ENCODE measurements at regions of chr22 and their contacts with region 1.

Region 1: DNA sequence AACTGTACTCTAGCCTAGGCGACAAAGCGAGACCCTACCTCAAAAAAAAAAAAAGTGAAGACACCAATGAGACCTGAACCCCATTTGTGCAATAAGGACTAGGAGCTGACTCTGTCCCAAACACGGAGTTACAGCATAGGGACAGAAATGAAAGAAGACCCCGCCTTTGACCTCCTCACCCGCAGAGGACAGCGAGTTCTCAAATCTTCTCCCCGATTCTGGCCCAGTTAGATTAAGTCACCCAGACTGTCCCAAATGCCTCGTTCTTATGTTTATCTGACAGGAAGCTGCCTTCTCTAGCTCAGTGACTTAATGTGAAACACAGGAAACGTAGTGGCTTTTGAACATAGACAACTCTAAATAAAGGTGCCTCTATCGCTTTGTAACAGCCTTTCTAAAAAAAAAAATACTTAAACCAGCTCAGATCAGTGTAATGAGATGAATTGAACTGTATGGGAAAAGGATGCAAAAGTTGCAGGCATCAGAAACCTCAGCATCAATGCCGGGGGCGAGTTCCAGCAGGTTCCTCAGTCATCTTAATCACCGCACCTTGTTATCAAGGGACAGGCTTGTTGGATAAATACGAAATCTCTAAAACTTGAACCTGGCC is 10.6 kb downstream of the MYH9 start:
- DNase-seq: no peak
- H3K4me3 ChIP-seq: no peak overlapping the region
- H3K27ac ChIP-seq: peak overlapping the region; percentile 4; the same call in 1 of the 2 replicates
- H3K4me1 ChIP-seq: peaks cover 93% of the 10 kb centered on the region
- H3K27me3 ChIP-seq: no peaks in the 10 kb centered on the region
- CTCF ChIP-seq: no peak

Region 2: DNA sequence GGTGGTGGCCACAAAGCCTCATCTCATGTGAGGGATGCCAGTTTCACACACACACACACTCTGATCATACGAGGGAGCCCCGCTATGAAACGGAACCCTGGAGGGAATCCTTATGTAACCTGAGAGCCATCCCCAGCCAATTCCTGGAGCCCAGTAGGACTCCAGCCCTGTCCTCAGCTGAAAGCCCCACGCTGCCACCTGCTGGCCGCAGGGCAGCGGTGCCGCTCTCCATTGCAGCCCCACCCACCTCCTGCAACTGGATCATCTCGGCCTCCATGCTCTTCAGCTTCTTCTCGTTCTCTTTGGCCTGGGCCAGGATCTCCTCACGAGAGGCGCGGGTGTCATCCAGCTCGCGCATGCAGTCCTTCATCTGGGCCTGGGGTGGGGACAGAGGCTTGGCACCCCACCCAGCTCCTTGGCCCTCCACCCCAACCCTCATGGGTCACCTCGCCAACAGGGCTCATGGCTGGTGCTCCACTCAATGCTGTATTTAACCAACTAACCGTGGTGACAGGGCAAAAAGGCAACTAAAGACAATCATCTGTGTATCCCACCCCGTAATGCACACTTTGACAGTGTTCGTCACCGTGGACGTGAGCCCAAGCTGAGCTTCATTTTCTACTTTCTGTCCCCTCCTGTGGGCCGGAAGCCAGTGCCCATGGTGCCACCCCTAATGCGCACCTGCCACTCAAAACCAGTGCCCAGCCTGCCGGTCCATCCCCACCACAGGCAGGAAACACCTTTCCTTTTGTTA is 90.5 kb before region 1 on chr22:
- CTCF ChIA-PET with region 1: interaction called, 3 read pairs
- POLR2A ChIA-PET with region 1: interaction called, 16 read pairs
- intact Hi-C with region 1: no loop called
- DNase-seq: peak; percentile 62 to 79
- H3K4me3 ChIP-seq: no peak overlapping the region
- H3K27ac ChIP-seq: no peak overlapping the region
- H3K4me1 ChIP-seq: no peaks in the 10 kb centered on the region
- H3K27me3 ChIP-seq: no peaks in the 10 kb centered on the region
- CTCF ChIP-seq: peak; percentile 97

Region 3: GRCh38 chr22:36946421-36947158 is 569.5 kb after region 1 on chr22:
- CTCF ChIA-PET with region 1: no interaction called
- POLR2A ChIA-PET with region 1: no interaction called
- intact Hi-C with region 1: no loop called
- DNase-seq: no peak
- H3K4me3 ChIP-seq: no peak overlapping the region
- H3K27ac ChIP-seq: no peak overlapping the region
- H3K4me1 ChIP-seq: no peaks in the 10 kb centered on the region
- H3K27me3 ChIP-seq: no peaks in the 10 kb centered on the region; the same call in 1 of the 2 replicates
- CTCF ChIP-seq: 0 out of 2 replicates have a peak, but pooled peaks have one; percentile 25

Measured in PC-9 (cell line).